B cell (primary cell): ENCODE measurements at regions of chr1 and their contacts with region 1.

Region 1: DNA sequence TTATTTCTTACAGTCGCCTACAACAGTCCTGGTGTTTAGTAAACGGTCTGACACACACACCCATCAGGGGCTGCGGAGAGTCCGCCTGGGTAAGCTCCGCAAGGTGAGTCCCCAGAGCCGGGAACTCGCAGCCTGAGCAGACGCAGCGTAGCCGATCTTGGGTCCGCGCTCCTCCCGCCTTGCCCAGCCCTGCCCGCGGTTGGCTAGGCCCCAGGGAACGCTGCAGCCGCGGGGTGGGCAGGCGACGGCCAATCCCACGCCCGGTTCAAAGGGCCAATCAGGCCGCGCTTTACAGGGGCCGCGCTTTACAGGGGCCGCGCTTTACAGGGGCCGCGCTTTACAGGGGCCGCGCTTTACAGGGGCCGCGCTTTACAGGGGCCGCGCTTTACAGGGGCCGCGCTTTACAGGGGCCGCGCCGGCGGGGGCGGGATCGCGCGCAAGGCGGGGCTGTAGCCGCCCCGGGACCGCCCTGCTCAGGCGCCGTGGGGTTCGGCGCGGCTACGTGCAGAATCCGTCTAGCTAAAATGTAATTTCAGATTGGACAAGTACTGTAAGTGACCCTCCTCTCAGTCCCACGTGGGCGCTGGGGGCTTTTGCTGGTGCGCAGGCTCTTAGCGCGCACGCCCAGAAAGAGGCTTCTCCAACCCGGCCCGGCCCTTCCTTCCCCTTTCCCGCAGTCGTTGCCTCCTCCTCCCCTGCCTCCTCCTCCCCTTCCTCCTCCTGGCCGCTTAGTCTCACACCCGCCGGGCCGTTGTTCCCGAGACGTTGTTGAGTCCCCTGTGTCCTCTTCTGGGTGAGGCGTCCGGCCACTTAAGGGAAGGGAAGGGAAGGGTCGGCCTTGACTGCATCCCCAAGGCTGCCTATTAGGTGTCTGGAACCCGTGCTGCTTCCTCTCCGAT is at the start of gene FGGY:
- DNase-seq: peak; percentile 97
- ATAC-seq: peak; percentile 89
- H3K4me3 ChIP-seq: peak within 1 kb of the TSS; percentile 63 to 92 (median 87)
- H3K4me3 Mint-ChIP-seq: peak within 1 kb of the TSS; percentile 91
- H3K27ac ChIP-seq: peak within 1 kb of the TSS; percentile 96 to 98
- H3K27ac Mint-ChIP-seq: peak within 1 kb of the TSS; percentile 98
- H3K4me1 ChIP-seq: peaks cover 22 to 25% of the 10 kb centered on the region in 2 donors
- H3K4me1 Mint-ChIP-seq: peaks cover 44% of the 10 kb centered on the region
- H3K27me3 ChIP-seq: no peaks in the 10 kb centered on the region
- H3K27me3 Mint-ChIP-seq: no peaks in the 10 kb centered on the region
- CTCF ChIP-seq: no peak
- total RNA-seq, gene FGGY: 34.0 and 38.5 TPM in 2 replicates

Region 2: DNA sequence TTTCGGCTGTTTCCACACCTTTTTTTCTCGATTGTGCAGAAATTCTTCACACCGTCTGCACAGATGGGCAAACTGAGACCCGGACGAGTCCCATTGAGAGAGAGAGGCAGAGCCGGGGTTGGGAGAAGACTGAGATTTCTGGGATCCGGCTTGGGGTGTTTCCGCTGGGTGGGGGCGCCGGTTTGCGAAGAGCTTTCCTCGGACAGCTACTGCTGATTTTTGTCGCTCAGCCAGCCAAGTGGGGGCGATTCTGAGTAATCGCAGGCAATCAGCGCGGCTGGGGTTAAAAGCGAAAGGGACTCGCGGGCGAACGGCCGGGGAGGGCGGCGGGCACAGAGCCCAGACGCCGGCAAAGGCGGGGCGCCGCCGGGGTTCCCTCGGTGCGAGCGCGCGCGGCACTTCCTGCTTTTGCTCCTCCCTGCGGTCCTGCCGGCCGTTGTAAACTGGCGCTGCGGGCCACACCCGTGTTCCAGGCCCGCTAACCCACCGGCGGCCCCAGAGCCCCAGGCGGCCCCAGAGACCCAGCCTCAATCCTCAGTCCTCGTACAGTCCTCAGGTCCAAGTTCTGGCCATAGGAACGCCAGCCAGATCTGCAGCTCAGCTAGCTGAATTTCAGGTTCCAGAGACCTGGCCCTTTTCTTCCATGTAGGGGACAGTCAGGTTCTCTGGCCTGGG is 480.4 kb before region 1 on chr1:
- CTCF ChIA-PET with region 1: no interaction called
- POLR2A ChIA-PET with region 1: no interaction called
- intact Hi-C with region 1: loop called (anchors 10 kb)
- DNase-seq: peak; percentile 88
- ATAC-seq: peak; percentile 88
- H3K4me3 ChIP-seq: peak overlapping the region; percentile 84 to 98 (median 88)
- H3K4me3 Mint-ChIP-seq: peak overlapping the region; percentile 95
- H3K27ac ChIP-seq: peak overlapping the region; percentile 88 to 91
- H3K27ac Mint-ChIP-seq: peak overlapping the region; percentile 96
- H3K4me1 ChIP-seq: peaks cover 29 to 45% of the 10 kb centered on the region in 2 donors
- H3K4me1 Mint-ChIP-seq: peaks cover 51% of the 10 kb centered on the region
- H3K27me3 ChIP-seq: no peaks in the 10 kb centered on the region
- H3K27me3 Mint-ChIP-seq: no peaks in the 10 kb centered on the region
- CTCF ChIP-seq: no peak

Region 3: DNA sequence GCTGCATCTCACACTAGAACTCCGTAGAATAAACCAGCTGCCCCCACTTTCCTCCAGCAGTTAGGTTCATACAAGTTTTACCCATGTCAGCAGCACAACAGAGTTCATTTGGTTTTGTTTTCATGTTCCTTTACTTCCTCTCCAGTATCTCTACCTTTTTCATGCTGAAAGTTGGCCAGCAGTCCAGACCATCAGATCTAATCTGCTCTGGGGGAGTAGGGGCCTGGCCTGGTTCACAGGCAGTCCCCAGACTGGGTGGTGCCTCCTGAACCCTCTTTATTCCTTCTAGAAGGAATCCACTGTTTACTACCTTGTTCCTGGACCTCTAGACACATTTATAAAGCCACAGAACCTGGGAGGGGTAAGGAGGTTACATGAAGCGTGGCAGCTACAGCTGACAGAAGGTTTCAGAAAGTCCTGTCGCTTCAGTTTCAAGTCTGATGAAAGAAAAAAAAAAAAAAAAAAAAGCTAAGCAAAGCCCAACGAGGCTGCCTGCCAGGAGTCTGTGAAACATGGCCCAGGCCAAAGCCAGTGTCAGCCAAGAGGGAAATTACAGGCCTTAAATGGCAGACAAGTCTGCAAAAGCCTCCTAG is 328.2 kb before region 1 on chr1:
- CTCF ChIA-PET with region 1: interaction called, 3 read pairs
- POLR2A ChIA-PET with region 1: no interaction called
- intact Hi-C with region 1: loop called (anchors 1 kb)
- DNase-seq: peak; percentile 86
- ATAC-seq: peak; percentile 90
- H3K4me3 ChIP-seq: peak overlapping the region in 3 of 5 experiments; percentile 29 to 59 (median 31)
- H3K4me3 Mint-ChIP-seq: peak overlapping the region; percentile 85
- H3K27ac ChIP-seq: peak overlapping the region; percentile 81 to 90
- H3K27ac Mint-ChIP-seq: peak overlapping the region; percentile 100
- H3K4me1 ChIP-seq: peaks cover 54 to 58% of the 10 kb centered on the region in 2 donors
- H3K4me1 Mint-ChIP-seq: peaks cover 70% of the 10 kb centered on the region
- H3K27me3 ChIP-seq: no peaks in the 10 kb centered on the region
- H3K27me3 Mint-ChIP-seq: no peaks in the 10 kb centered on the region
- CTCF ChIP-seq: no peak

Region 4: DNA sequence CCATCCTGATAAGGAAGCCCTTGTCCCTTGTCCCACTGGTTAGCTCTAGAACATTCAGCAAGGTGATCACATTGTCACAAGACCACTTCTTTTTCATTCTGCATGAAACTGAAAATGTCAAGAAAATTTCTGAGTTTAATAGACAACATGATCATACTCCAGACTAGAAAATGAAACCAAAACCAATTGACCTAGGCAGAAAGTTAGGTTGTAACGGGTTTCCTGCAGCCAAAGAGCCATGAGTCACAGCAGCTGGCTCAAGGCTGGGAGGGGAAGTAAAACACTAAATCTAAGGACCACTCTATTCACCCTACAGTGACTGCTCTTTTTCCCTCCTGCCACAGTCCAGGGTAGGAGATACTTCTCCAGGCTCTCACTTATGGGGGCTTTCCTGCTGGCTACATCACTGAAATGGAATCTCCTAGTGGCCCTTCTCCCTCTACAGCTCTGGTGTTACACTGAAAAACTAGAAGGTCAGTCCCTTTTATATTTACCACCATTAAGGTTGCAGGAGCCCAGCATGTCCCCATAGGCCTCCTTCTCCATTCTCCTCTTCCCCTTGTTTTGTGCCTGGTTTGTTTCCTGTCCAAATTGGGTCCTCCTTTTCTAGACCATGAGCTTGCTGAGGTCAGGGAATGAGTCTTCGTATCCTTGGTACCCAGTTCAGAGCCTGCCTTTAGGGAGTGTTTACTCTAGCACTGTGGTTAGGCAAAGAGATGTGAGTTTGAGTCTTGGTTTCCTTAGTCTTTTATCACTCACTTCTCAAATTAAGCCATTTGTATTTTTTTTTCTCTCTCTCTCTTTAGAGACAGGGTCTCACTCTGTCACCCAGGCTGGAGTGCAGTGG is 276.2 kb before region 1 on chr1:
- CTCF ChIA-PET with region 1: no interaction called
- POLR2A ChIA-PET with region 1: no interaction called
- intact Hi-C with region 1: loop called (anchors 2 kb)
- DNase-seq: peak; percentile 83
- ATAC-seq: peak; percentile 94
- H3K4me3 ChIP-seq: peak overlapping the region in 3 of 5 experiments; percentile 18 to 41 (median 33)
- H3K4me3 Mint-ChIP-seq: peak overlapping the region; percentile 76
- H3K27ac ChIP-seq: peak overlapping the region; percentile 81 to 82
- H3K27ac Mint-ChIP-seq: peak overlapping the region; percentile 96
- H3K4me1 ChIP-seq: peaks cover 22 to 38% of the 10 kb centered on the region in 2 donors
- H3K4me1 Mint-ChIP-seq: peaks cover 48% of the 10 kb centered on the region
- H3K27me3 ChIP-seq: no peaks in the 10 kb centered on the region
- H3K27me3 Mint-ChIP-seq: no peaks in the 10 kb centered on the region
- CTCF ChIP-seq: no peak

Region 5: DNA sequence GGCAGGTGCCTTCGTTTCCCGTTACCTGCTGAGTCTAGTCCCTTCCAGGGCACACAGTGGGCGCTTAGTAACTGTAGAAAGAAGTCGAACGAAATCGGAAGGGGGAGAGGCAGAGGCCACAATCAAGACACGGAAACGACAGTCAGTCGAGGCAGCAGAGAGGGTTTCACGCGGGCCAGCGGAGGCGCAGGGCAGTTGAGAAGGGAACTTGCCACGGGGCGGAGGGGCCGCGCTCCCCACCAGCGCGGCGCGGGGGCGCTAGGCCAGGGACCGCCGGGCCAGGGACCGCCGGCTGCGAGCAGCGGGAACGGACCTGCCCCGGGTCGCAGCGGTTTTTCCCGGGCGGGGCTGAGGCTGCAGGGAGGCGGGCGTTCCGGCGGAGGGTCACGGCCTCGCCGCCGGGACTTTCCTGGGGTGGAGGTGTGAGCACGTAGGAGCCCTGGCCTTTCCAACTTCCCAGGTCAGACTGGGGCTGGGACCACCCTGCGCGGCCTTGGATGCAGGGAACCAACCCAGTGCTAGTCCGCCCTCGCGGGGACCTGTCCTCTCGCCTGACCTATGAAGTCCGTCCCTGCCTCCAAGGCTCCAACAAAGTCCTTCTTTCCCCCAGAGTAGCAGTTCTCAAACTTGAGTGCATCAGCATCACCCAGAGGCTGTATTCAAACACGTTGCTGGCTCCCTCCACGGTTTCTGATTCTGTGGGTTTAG is 149.8 kb before region 1 on chr1:
- CTCF ChIA-PET with region 1: interaction called, 6 read pairs
- POLR2A ChIA-PET with region 1: interaction called, 3 read pairs
- intact Hi-C with region 1: loop called (anchors 2 kb)
- DNase-seq: peak; percentile 78
- ATAC-seq: peak; percentile 85
- H3K4me3 ChIP-seq: peak overlapping the region; percentile 31 to 69 (median 58)
- H3K4me3 Mint-ChIP-seq: peak overlapping the region; percentile 94
- H3K27ac ChIP-seq: peak overlapping the region; percentile 49 to 72
- H3K27ac Mint-ChIP-seq: peak overlapping the region; percentile 88
- H3K4me1 ChIP-seq: peaks cover 16 to 28% of the 10 kb centered on the region in 2 donors
- H3K4me1 Mint-ChIP-seq: peaks cover 32% of the 10 kb centered on the region
- H3K27me3 ChIP-seq: no peaks in the 10 kb centered on the region
- H3K27me3 Mint-ChIP-seq: no peaks in the 10 kb centered on the region
- CTCF ChIP-seq: peak; percentile 45

Region 6: GRCh38 chr1:59272507-59272906 is 24.1 kb before region 1 on chr1:
- CTCF ChIA-PET with region 1: interaction called, 8 read pairs
- POLR2A ChIA-PET with region 1: interaction called, 8 read pairs
- intact Hi-C with region 1: loop called (anchors 1 kb)
- DNase-seq: peak; percentile 66
- ATAC-seq: peak; percentile 91
- H3K4me3 ChIP-seq: no peak overlapping the region
- H3K4me3 Mint-ChIP-seq: peak overlapping the region; percentile 20
- H3K27ac ChIP-seq: no peak overlapping the region
- H3K27ac Mint-ChIP-seq: peak overlapping the region; percentile 88
- H3K4me1 ChIP-seq: peaks cover 13 to 21% of the 10 kb centered on the region in 2 donors
- H3K4me1 Mint-ChIP-seq: peaks cover 34% of the 10 kb centered on the region
- H3K27me3 ChIP-seq: no peaks in the 10 kb centered on the region
- H3K27me3 Mint-ChIP-seq: no peaks in the 10 kb centered on the region
- CTCF ChIP-seq: no peak

Region 7: GRCh38 chr1:59316497-59317128 is 20.0 kb after region 1 on chr1:
- CTCF ChIA-PET with region 1: no interaction called
- POLR2A ChIA-PET with region 1: no interaction called
- intact Hi-C with region 1: no loop called
- DNase-seq: no peak
- ATAC-seq: no peak
- H3K4me3 ChIP-seq: no peak overlapping the region
- H3K4me3 Mint-ChIP-seq: peak overlapping the region; percentile 31
- H3K27ac ChIP-seq: no peak overlapping the region
- H3K27ac Mint-ChIP-seq: no peak overlapping the region
- H3K4me1 ChIP-seq: peaks cover 0 to 8% of the 10 kb centered on the region in 2 donors
- H3K4me1 Mint-ChIP-seq: peaks cover 14% of the 10 kb centered on the region
- H3K27me3 ChIP-seq: no peaks in the 10 kb centered on the region
- H3K27me3 Mint-ChIP-seq: no peaks in the 10 kb centered on the region
- CTCF ChIP-seq: no peak